GM10248 (cell line): ENCODE measurements at regions of chr12 and their contacts with region 1.

Region 1: GRCh38 chr12:122123051-122123760 is 44.6 kb downstream of the MLXIP start:
- DNase-seq: peak; percentile 83
- CTCF ChIP-seq: peak; percentile 70

Region 2: GRCh38 chr12:121917979-121918678 is 205.1 kb before region 1 on chr12 and contains the start of gene CFAP251:
- CTCF ChIA-PET with region 1: interaction called, 10 read pairs
- POLR2A ChIA-PET with region 1: no interaction called
- DNase-seq: peak; percentile 97
- CTCF ChIP-seq: peak; percentile 56

Region 3: GRCh38 chr12:122013136-122013535 is 110.1 kb before region 1 on chr12:
- CTCF ChIA-PET with region 1: no interaction called
- POLR2A ChIA-PET with region 1: no interaction called
- DNase-seq: no peak
- CTCF ChIP-seq: no peak

Region 4: DNA sequence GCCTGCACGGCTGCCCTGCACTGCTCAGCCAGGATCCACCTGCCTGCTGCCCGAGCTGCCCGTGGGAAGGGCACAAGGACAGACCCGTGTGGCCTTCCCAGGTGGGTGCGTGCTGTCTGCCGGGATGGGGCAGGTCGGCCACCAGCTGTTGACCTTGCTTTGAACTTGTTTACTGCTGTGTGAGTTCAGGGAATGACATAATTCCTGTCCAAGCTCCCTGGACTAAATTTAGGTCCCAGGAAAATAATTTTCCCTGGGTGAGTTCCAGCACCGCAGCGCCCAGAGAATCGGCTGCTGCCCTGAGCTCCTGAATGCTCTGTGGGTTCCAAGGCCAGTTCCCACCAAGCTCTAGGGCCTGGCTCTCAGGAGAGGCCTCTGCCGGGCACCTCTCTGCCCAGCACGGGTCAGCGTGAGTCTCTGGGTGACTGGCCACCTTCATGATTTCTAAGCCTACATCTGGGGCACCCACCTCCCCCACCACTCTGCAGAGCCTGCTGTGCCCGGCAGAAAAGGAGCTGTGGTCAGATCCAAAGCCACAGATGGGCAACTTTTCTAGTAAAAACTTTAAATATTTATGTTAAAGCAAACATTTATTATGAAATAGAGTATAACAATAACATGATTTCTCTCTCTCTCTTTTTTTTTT is 71.9 kb before region 1 on chr12:
- CTCF ChIA-PET with region 1: interaction called, 209 read pairs
- POLR2A ChIA-PET with region 1: no interaction called
- DNase-seq: no peak
- CTCF ChIP-seq: no peak

Region 5: DNA sequence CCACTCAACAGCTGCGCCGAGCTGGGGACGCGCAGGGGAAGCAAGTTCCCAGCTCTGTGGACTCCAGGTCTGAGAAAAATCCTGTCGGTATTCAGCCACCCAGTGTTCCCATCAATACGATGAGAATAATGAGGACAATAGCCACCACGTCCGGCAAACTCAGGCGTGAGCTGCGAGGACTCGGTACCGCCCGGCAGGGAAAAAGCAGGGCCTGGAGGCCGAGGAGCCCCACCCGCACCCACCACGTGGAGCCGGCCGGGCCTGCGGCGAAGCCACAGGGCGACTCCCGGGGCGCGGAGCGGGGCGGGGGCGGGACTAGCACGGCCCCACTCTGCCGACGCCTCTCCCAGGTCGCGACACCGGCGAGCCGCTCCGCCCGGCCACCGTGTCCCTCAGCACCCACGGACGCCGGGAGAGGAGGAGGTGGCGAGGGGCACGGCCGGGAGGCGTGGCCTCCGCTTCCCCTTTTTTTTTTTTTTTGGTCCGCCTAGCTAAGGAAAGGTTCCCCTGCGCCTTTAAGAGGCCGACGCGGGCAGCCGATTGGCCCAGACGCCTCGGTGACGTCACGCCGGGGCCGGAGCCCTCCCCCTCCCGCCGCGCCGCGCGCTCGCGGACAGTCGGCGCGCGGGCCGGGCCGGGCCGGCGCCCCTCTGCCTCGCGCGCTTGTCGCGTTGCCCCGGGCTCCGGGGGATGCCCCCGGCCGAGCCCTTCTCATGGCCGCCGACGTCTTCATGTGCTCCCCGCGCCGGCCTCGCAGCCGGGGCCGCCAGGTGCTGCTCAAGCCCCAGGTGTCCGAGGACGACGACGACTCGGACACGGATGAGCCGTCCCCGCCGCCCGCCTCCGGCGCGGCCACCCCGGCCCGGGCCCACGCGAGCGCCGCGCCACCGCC is 44.8 kb before region 1 on chr12 and contains the start of gene MLXIP:
- CTCF ChIA-PET with region 1: interaction called, 12 read pairs
- POLR2A ChIA-PET with region 1: no interaction called
- DNase-seq: peak; percentile 96
- CTCF ChIP-seq: no peak

Region 6: DNA sequence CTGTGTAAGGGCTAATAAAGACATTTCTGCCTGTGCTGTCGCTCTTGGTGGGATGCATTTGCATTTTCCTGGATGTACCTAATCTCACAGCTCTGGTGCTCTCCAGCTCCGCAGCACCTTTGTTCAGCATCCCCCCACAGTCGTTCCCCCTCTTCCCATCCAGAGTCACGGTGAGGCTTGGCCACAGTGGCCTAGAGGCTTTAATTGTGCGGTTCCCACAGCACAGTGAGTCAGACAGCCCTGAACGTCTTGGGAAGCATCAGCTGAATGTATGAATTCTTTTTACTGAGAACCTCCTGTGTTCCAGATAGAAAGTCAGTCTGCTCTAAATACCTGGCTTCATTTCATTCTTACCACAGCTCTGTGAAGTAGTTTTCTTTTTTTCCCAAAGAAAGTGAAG is 15.9 kb before region 1 on chr12:
- CTCF ChIA-PET with region 1: interaction called, 34 read pairs
- POLR2A ChIA-PET with region 1: no interaction called
- DNase-seq: no peak
- CTCF ChIP-seq: no peak

Region 7: GRCh38 chr12:122190842-122191668 is 67.8 kb after region 1 on chr12:
- CTCF ChIA-PET with region 1: interaction called, 73 read pairs
- POLR2A ChIA-PET with region 1: no interaction called
- DNase-seq: peak; percentile 86
- CTCF ChIP-seq: peak; percentile 87